ENCODE measurements at regions of chr1 and their contacts with region 1.

Region 1: DNA sequence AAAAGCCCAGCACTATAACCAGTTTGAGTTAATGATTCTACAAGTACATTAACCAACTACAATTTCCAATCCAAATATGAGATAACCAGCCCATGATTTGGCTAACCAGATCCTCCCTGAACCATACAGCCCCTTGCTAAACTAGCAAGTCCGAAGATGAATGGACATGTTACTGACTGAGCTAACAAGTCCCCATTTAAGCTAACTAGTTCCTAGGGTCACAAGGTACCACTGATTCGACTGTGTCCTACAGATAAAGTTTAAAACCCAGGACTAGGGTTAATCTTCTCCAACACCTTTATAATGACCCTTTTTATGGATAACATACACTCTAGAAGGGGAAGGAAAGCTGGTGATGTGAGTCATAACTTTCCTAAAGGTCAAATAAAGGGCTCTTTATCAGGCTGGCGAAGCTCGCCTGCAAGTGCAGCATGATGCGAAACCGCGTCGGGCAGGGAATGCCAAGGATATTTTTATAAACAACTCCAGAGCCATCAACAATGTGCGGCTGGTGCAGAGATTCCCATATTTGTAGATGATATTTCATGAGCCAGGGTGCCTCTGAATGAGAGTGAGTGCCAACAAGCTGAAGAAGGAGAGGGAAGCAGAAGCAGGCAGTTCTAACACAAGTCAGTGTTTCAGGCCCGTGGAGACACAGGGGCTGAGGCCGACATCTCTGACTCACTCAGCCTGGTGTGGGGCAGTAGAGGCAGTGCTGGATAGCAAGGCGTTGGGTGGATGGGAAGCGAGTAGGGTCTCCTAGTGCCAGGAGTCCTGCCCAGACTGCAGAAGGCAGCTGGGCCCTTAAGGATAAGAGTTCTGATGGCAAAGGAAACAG is 75.6 kb upstream of the ROR1 start:
- DNase-seq: peak; percentile 69 to 90 (median 77)
- ATAC-seq: peak; percentile 87 to 93 (median 91)
- H3K4me3 ChIP-seq: no peak overlapping the region
- H3K27ac ChIP-seq: peak overlapping the region; percentile 67 to 99 (median 92)
- H3K4me1 ChIP-seq: peaks cover 0 to 38% (median 8%) of the 10 kb centered on the region in 12 donors
- H3K27me3 ChIP-seq: no peaks in the 10 kb centered on the region
- CTCF ChIP-seq: no peak
- POLR2A ChIP-seq: peak in 1 of 2 donors; percentile 51

Region 2: GRCh38 chr1:63662056-63662836 is 36.0 kb before region 1 on chr1:
- intact Hi-C with region 1: no loop called
- DNase-seq: peak in 2 of 5 donors; percentile 16 to 42
- ATAC-seq: peak in 3 of 4 donors; percentile 57 to 69 (median 64)
- H3K4me3 ChIP-seq: no peak overlapping the region
- H3K27ac ChIP-seq: peak overlapping the region in 7 of 12 donors; percentile 14 to 67 (median 49)
- H3K4me1 ChIP-seq: peaks cover 0 to 22% (median 2%) of the 10 kb centered on the region in 12 donors
- H3K27me3 ChIP-seq: no peaks in the 10 kb centered on the region
- CTCF ChIP-seq: no peak
- POLR2A ChIP-seq: no peak

Region 3: GRCh38 chr1:63859480-63860270 is 161.5 kb after region 1 on chr1:
- intact Hi-C with region 1: loop called in 2 of 10 experiments (anchors 5 to 10 kb)
- DNase-seq: peak in 1 of 5 donors; percentile 37
- ATAC-seq: peak; percentile 11 to 54 (median 28)
- H3K4me3 ChIP-seq: no peak overlapping the region
- H3K27ac ChIP-seq: peak overlapping the region in 4 of 12 donors; percentile 4 to 70 (median 39)
- H3K4me1 ChIP-seq: peaks cover 0 to 52% (median 14%) of the 10 kb centered on the region in 12 donors
- H3K27me3 ChIP-seq: no peaks in the 10 kb centered on the region
- CTCF ChIP-seq: no peak
- POLR2A ChIP-seq: no peak

Region 4: GRCh38 chr1:63917571-63918417 is 219.6 kb after region 1 on chr1:
- intact Hi-C with region 1: loop called in 7 of 10 experiments (anchors 5 to 10 kb)
- DNase-seq: no peak
- ATAC-seq: no peak
- H3K4me3 ChIP-seq: no peak overlapping the region
- H3K27ac ChIP-seq: no peak overlapping the region
- H3K4me1 ChIP-seq: peaks cover 0 to 72% (median 19%) of the 10 kb centered on the region in 12 donors
- H3K27me3 ChIP-seq: no peaks in the 10 kb centered on the region
- CTCF ChIP-seq: peak in 3 of 12 donors; percentile 17 to 25 (median 18)
- POLR2A ChIP-seq: no peak